Posterior vena cava (tissue), 2 donors: ENCODE measurements at regions of chr5 and their contacts with region 1.

Region 1: GRCh38 chr5:139723986-139724587 is 71.5 kb upstream of the PSD2 start:
- DNase-seq: no peak

Region 2: GRCh38 chr5:139698490-139699146 is 25.5 kb before region 1 on chr5:
- intact Hi-C with region 1: loop called in 1 of 2 experiments (anchors 1 kb)
- DNase-seq: peak; percentile 95